Aorta (tissue), 5 donors: ENCODE measurements at regions of chr22 and their contacts with region 1.

Region 1: DNA sequence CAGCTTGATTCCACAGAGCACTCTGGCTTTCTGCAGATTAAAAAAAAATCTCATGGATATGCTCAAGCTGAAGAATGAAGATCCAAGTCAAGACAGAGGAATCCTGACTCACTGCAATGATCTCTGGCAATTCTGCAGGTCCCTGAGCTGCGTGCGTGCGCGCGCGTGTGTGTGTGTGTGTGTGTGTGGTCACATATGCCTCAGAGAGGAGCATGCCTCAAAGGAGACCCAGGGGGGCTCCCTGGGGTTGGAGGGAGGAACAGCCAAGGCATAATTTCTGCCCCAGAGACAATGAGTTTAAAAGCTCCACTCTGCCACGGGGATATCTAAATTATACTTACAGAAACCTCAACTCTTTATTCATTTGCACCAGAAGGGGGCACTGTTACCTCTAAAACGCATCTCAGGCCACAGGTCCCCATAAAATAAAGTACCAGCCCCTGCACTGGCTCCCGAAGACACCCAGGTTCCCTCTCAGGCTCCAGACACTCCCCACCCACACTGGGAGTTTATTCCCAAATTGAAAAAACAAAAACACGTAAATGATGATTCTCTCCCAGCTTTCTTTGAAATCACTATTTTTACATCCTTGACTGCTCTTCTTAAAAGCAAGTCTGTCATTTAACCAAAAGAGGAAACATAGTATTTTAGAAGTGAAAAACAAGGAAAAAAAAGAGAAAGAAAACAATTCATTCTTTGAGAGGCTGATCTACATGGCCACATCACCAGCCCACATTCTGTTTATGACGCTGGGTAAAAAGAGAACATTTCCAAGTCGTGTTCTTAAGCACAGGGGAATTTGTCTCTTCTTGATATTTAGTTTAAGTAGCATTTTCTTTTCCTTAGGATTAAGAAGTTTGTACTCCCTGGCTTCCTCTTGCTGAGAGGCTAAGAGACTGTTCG is 401.0 kb downstream of the LARGE1 start:
- DNase-seq: no peak
- ATAC-seq: peak; percentile 59
- H3K4me3 ChIP-seq: no peak overlapping the region
- H3K27ac ChIP-seq: no peak overlapping the region
- H3K4me1 ChIP-seq: no peaks in the 10 kb centered on the region
- H3K27me3 ChIP-seq: no peaks in the 10 kb centered on the region

Region 2: GRCh38 chr22:33706100-33706499 is 186.8 kb after region 1 on chr22:
- intact Hi-C with region 1: no loop called
- DNase-seq: no peak
- ATAC-seq: no peak
- H3K4me3 ChIP-seq: no peak overlapping the region
- H3K27ac ChIP-seq: no peak overlapping the region
- H3K4me1 ChIP-seq: no peaks in the 10 kb centered on the region
- H3K27me3 ChIP-seq: no peaks in the 10 kb centered on the region

Region 3: GRCh38 chr22:34105461-34106062 is 586.2 kb after region 1 on chr22:
- intact Hi-C with region 1: loop called (anchors 5 kb)
- DNase-seq: peak; percentile 55 to 76
- ATAC-seq: no peak
- H3K4me3 ChIP-seq: no peak overlapping the region
- H3K27ac ChIP-seq: no peak overlapping the region
- H3K4me1 ChIP-seq: no peaks in the 10 kb centered on the region
- H3K27me3 ChIP-seq: no peaks in the 10 kb centered on the region